ENCODE measurements at regions of chr5 and their contacts with region 1.

Region 1: GRCh38 chr5:54249210-54250028 is 61.0 kb downstream of the ARL15 start:
- DNase-seq: peak; percentile 34
- ATAC-seq: peak; percentile 20 to 44

Region 2: GRCh38 chr5:54310433-54311175 is 61.2 kb after region 1 on chr5 and contains the start of gene ARL15:
- intact Hi-C with region 1: loop called (anchors 2 to 10 kb)
- DNase-seq: peak; percentile 99
- ATAC-seq: peak; percentile 98 to 99
- total RNA-seq, gene ARL15: 19.0 to 22.7 TPM

Region 3: GRCh38 chr5:54329731-54330709 is 80.6 kb after region 1 on chr5:
- intact Hi-C with region 1: no loop called
- DNase-seq: no peak
- ATAC-seq: peak in 1 of 2 donors; percentile 76

Region 4: GRCh38 chr5:54415896-54416601 is 166.6 kb after region 1 on chr5:
- intact Hi-C with region 1: loop called (anchors 5 to 10 kb)
- DNase-seq: no peak
- ATAC-seq: no peak

Region 5: GRCh38 chr5:54421976-54422375 is 172.6 kb after region 1 on chr5:
- intact Hi-C with region 1: loop called (anchors 5 to 10 kb)
- DNase-seq: no peak
- ATAC-seq: no peak

Region 6: GRCh38 chr5:54492178-54492577 is 242.8 kb after region 1 on chr5:
- intact Hi-C with region 1: loop called in 1 of 2 experiments (anchors 5 kb)
- DNase-seq: no peak
- ATAC-seq: no peak